ENCODE measurements at regions of chr1 and their contacts with region 1.

Region 1: GRCh38 chr1:153866045-153866850 is 56.5 kb downstream of the GATAD2B start:
- DNase-seq: no peak
- ATAC-seq: no peak
- H3K4me3 ChIP-seq: no peak overlapping the region
- H3K27ac ChIP-seq: no peak overlapping the region
- H3K4me1 ChIP-seq: peaks cover 4% of the 10 kb centered on the region
- H3K27me3 ChIP-seq: no peaks in the 10 kb centered on the region
- CTCF ChIP-seq: no peak

Region 2: DNA sequence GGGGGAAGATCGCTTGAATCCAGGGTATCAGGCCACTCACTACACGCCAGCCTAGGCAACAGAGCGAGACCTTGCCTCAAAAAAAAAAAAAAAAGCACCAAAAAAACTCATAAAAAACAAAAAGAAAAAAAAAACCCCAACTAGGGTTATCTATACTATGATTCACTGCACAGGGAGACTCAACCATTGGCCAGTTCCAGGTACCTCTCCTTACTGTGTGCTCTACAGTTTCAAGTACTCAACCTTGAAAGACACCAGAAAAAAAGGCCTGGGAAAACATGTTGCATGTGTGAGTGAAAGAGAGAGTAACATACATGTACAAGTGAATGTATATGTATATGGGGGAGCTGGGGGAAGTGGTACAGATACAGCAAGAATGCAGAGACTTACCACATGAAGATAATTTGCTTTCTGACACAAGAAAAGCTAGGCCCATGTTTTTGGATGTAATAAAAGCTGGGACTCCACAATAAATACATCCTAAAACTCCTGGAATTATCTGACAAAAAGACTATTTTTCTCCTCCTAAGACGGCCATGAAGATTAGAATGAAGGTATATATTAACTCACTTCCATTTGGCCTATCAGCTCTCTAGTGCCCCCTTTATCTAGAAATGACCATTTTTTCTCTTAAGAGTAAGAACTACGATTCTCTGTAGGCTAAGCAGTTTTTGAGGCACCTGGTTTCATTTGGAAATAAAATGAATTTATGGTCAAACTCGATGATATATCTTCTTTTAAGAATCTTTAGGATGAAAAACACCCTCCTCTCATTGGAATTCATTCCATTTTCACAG is 38.9 kb before region 1 on chr1:
- intact Hi-C with region 1: loop called in 1 of 2 experiments (anchors 5 kb)
- DNase-seq: no peak
- ATAC-seq: no peak
- H3K4me3 ChIP-seq: no peak overlapping the region
- H3K27ac ChIP-seq: no peak overlapping the region
- H3K4me1 ChIP-seq: peaks cover 6% of the 10 kb centered on the region
- H3K27me3 ChIP-seq: no peaks in the 10 kb centered on the region
- CTCF ChIP-seq: no peak

Region 3: GRCh38 chr1:153841463-153841994 is 24.7 kb before region 1 on chr1:
- intact Hi-C with region 1: no loop called
- DNase-seq: no peak
- ATAC-seq: peak in 1 of 4 donors; percentile 11
- H3K4me3 ChIP-seq: no peak overlapping the region
- H3K27ac ChIP-seq: no peak overlapping the region
- H3K4me1 ChIP-seq: peaks cover 13% of the 10 kb centered on the region
- H3K27me3 ChIP-seq: no peaks in the 10 kb centered on the region
- CTCF ChIP-seq: no peak